KBM-7 (cell line): ENCODE measurements at regions of chr6 and their contacts with region 1.

Region 1: GRCh38 chr6:107957909-107958688 is at the start of gene SEC63:
- DNase-seq: peak; percentile 91

Region 2: GRCh38 chr6:109095027-109095834 is 1137.1 kb after region 1 on chr6 and contains the start of gene CEP57L1:
- in situ Hi-C with region 1: loop called (anchors 25 kb)
- DNase-seq: peak; percentile 98